Sigmoid colon (tissue), 7 donors: ENCODE measurements at regions of chr5 and their contacts with region 1.

Region 1: GRCh38 chr5:151771259-151772028 is at the start of gene G3BP1:
- DNase-seq: peak; percentile 100
- H3K4me3 ChIP-seq: peak within 1 kb of the TSS; percentile 84 to 91 (median 88)
- H3K27ac ChIP-seq: peak within 1 kb of the TSS; percentile 93 to 99 (median 98)
- H3K4me1 ChIP-seq: peaks cover 0 to 47% (median 43%) of the 10 kb centered on the region in 4 donors
- H3K27me3 ChIP-seq: no peaks in the 10 kb centered on the region
- CTCF ChIP-seq: peak in 2 of 4 experiments; percentile 18 to 49
- EP300 ChIP-seq: no peak
- POLR2A ChIP-seq: peak; percentile 96 to 98
- total RNA-seq, gene G3BP1: 68.5 to 158 (median 72.2) TPM

Region 2: GRCh38 chr5:151758430-151759241 is 12.8 kb before region 1 on chr5 and contains the start of gene ATOX1:
- intact Hi-C with region 1: loop called (anchors 1 kb)
- DNase-seq: peak; percentile 95
- H3K4me3 ChIP-seq: peak within 1 kb of the TSS; percentile 75 to 87 (median 80)
- H3K27ac ChIP-seq: peak within 1 kb of the TSS; percentile 84 to 94 (median 88)
- H3K4me1 ChIP-seq: peaks cover 0 to 27% (median 24%) of the 10 kb centered on the region in 4 donors
- H3K27me3 ChIP-seq: no peaks in the 10 kb centered on the region
- CTCF ChIP-seq: peak; percentile 19 to 38 (median 30)
- EP300 ChIP-seq: no peak
- POLR2A ChIP-seq: peak; percentile 87 to 89
- total RNA-seq, gene ATOX1: 62.0 to 130 (median 80.4) TPM

Region 3: DNA sequence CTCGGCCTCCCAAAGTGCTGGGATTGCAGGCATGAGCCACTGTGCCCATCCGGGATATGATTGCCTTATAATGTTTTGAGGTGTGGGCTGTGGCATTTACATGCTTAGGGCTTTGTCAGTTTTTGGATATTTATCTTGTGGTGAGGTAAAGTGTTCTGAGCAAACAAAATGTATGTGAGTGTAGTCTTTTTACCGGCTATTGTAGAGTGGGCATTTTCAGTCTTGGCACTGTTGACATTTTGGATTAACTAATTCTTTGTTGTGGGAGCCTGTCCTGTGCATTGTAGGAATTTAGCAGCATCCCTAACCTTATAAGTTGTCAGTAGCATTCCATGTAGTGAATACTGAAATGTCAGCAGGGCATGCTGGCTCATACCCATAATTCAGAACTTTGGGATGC is 21.9 kb after region 1 on chr5:
- intact Hi-C with region 1: no loop called
- DNase-seq: no peak
- H3K4me3 ChIP-seq: no peak overlapping the region
- H3K27ac ChIP-seq: no peak overlapping the region
- H3K4me1 ChIP-seq: peaks cover 0 to 5% (median 0%) of the 10 kb centered on the region in 4 donors
- H3K27me3 ChIP-seq: no peaks in the 10 kb centered on the region
- CTCF ChIP-seq: no peak
- EP300 ChIP-seq: no peak
- POLR2A ChIP-seq: no peak

Region 4: GRCh38 chr5:151947925-151948608 is 176.6 kb after region 1 on chr5:
- intact Hi-C with region 1: no loop called
- DNase-seq: no peak
- H3K4me3 ChIP-seq: no peak overlapping the region
- H3K27ac ChIP-seq: no peak overlapping the region
- H3K4me1 ChIP-seq: no peaks in the 10 kb centered on the region
- H3K27me3 ChIP-seq: no peaks in the 10 kb centered on the region
- CTCF ChIP-seq: no peak
- EP300 ChIP-seq: no peak
- POLR2A ChIP-seq: no peak